ENCODE measurements at regions of chr14 and their contacts with region 1.

Region 1: GRCh38 chr14:98112194-98112780 is 1159.7 kb downstream of the BCL11B start:
- DNase-seq: no peak
- ATAC-seq: no peak
- H3K4me3 ChIP-seq: no peak overlapping the region
- H3K4me3 Mint-ChIP-seq: no peak overlapping the region
- H3K27ac ChIP-seq: no peak overlapping the region
- H3K27ac Mint-ChIP-seq: no peak overlapping the region
- H3K4me1 ChIP-seq: no peaks in the 10 kb centered on the region
- H3K4me1 Mint-ChIP-seq: peaks cover 0 to 6% (median 5%) of the 10 kb centered on the region in 3 donors
- H3K27me3 ChIP-seq: no peaks in the 10 kb centered on the region
- H3K27me3 Mint-ChIP-seq: no peaks in the 10 kb centered on the region

Region 2: GRCh38 chr14:98868866-98869265 is 756.6 kb after region 1 on chr14:
- CTCF ChIA-PET with region 1: no interaction called
- POLR2A ChIA-PET with region 1: interaction called in 1 of 2 experiments, 10 read pairs
- DNase-seq: no peak
- ATAC-seq: no peak
- H3K4me3 ChIP-seq: no peak overlapping the region
- H3K4me3 Mint-ChIP-seq: no peak overlapping the region
- H3K27ac ChIP-seq: no peak overlapping the region
- H3K27ac Mint-ChIP-seq: no peak overlapping the region
- H3K4me1 ChIP-seq: no peaks in the 10 kb centered on the region
- H3K4me1 Mint-ChIP-seq: peaks cover 5 to 19% (median 5%) of the 10 kb centered on the region in 3 donors
- H3K27me3 ChIP-seq: peaks cover 0 to 4% of the 10 kb centered on the region in 2 experiments
- H3K27me3 Mint-ChIP-seq: no peaks in the 10 kb centered on the region